Adrenal gland (tissue), 19 donors: ENCODE measurements at regions of chr12 and their contacts with region 1.

Region 1: DNA sequence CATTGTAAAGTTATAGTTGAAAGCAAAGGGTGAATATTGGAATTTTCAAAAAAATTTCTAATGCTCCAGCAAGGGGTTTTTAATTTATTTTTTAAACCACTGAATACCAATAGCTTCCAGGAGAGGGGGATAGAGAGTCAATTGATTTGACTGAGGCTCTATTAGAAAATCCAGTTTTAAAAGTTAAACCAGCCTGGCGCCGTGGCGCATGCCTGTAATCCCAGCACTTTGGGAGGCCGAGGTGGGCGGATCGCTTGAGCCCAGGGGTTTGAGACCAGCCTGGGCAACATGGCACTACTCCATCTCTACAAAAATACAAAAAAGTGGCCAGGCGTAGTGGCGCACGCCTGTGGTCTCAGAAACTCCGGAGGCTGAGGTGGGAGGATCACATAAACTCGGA is 150.1 kb downstream of the SLC38A4 start:
- DNase-seq: peak; percentile 26 to 65 (median 36)
- H3K4me3 ChIP-seq: peak overlapping the region in 1 of 4 donors; percentile 24
- H3K27ac ChIP-seq: no peak overlapping the region
- H3K4me1 ChIP-seq: no peaks in the 10 kb centered on the region
- H3K27me3 ChIP-seq: no peaks in the 10 kb centered on the region
- CTCF ChIP-seq: peak; percentile 67 to 81 (median 70)
- POLR2A ChIP-seq: no peak

Region 2: GRCh38 chr12:46342562-46343033 is 333.1 kb before region 1 on chr12:
- intact Hi-C with region 1: loop called in 1 of 2 experiments (anchors 5 kb)
- DNase-seq: peak in 5 of 7 donors; percentile 20 to 58 (median 35)
- H3K4me3 ChIP-seq: no peak overlapping the region
- H3K27ac ChIP-seq: no peak overlapping the region
- H3K4me1 ChIP-seq: no peaks in the 10 kb centered on the region
- H3K27me3 ChIP-seq: no peaks in the 10 kb centered on the region
- CTCF ChIP-seq: peak; percentile 16 to 73 (median 62)
- POLR2A ChIP-seq: no peak

Region 3: DNA sequence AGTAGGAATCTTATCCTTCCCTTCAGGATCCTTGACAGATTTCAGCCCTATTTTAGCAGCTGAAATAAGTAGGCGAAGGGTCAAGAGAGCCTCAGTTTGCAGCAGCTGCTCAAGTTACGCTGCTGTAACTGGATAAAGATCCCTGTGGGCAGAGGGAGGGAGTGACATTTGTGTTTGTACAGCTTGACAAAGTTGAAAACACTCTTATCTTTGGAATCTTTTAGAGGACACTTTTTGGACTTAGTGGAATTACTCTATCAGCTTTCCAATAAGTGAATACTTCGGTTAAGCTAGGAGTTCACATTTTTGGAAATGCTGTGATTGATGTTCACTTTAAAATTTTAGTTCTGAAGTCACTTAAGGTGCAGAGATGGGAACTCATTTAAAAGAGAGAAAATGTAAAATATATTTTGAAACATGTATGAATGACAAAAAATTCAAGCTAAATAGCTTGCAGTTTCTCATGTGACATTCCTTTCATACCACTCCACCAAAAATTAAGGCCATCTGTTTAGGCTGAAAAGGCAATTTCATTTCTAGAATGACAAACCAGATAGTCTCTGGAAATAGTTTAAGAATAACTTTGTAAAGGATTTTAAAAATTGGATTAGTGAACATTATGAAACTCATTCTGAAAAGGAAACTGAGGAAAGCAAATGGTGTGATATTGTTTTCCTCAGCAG is 94.9 kb after region 1 on chr12:
- intact Hi-C with region 1: no loop called
- DNase-seq: peak; percentile 14 to 68 (median 34)
- H3K4me3 ChIP-seq: no peak overlapping the region
- H3K27ac ChIP-seq: peak overlapping the region in 3 of 5 donors; percentile 13 to 53 (median 49)
- H3K4me1 ChIP-seq: peaks cover 16 to 18% of the 10 kb centered on the region in 2 donors
- H3K27me3 ChIP-seq: no peaks in the 10 kb centered on the region
- CTCF ChIP-seq: no peak
- POLR2A ChIP-seq: no peak

Region 4: DNA sequence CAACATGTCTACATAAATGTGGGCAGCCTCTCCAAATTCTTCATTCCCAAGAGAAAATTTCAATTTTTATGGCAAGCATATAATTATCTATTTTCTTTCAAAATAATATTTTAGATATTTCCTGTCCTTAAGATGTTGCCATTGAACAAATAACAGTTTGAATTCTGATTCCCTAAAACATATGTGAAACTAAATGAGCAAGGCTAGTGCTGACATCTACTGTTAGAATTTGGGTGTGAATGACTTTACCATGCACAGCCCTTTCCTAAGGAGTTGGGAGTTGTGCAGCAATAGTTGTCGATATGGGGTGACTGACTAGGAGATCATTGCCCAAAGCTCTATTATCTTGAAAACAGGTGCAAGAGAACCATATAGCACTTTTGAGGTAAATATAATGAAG is 258.2 kb after region 1 on chr12:
- intact Hi-C with region 1: loop called in 1 of 2 experiments (anchors 5 kb)
- DNase-seq: peak in 1 of 7 donors; percentile 5
- H3K4me3 ChIP-seq: no peak overlapping the region
- H3K27ac ChIP-seq: no peak overlapping the region
- H3K4me1 ChIP-seq: no peaks in the 10 kb centered on the region
- H3K27me3 ChIP-seq: no peaks in the 10 kb centered on the region
- CTCF ChIP-seq: peak; percentile 28 to 66 (median 54)
- POLR2A ChIP-seq: no peak

Region 5: DNA sequence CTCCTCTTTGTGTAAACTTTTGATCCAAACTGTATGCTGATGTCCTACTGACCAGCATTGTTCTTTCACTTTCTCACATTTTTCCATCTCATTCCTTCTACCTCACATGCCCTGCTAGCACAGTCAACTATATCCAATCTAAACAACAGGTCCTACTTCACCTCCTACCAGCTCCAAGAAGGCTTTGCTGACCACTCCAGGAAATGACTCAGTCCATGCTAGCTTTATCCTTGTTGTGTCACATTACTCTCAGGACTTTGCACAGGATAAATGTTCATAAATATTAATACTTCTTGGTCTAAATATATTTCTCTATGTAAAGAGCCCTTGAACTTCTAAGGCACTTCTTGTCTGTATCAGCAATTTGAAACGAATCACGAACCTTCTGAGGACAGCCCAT is 338.7 kb after region 1 on chr12:
- intact Hi-C with region 1: loop called in 1 of 2 experiments (anchors 10 kb)
- DNase-seq: no peak
- H3K4me3 ChIP-seq: no peak overlapping the region
- H3K27ac ChIP-seq: no peak overlapping the region
- H3K4me1 ChIP-seq: no peaks in the 10 kb centered on the region
- H3K27me3 ChIP-seq: no peaks in the 10 kb centered on the region
- CTCF ChIP-seq: no peak
- POLR2A ChIP-seq: no peak

Region 6: DNA sequence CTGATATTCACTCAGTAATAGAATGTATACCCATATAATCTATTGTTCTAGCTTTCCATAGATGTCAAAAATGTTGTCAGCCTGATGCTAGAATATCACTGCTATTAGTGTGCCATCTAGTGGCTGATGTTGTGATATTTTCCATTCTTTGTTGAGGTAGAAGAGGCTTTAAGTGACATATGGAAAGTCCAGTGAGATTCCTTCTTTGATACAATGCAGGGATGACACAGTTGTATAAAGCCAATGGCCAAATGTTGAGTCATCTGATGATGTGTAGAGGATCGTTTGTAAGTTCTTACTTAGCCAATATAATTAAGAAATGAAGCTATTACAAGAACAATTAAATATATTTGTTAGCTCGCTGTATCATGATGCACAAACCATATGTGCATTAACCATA is 345.6 kb after region 1 on chr12:
- intact Hi-C with region 1: loop called (anchors 10 kb)
- DNase-seq: no peak
- H3K4me3 ChIP-seq: no peak overlapping the region
- H3K27ac ChIP-seq: no peak overlapping the region
- H3K4me1 ChIP-seq: no peaks in the 10 kb centered on the region
- H3K27me3 ChIP-seq: no peaks in the 10 kb centered on the region
- CTCF ChIP-seq: peak; percentile 61 to 75 (median 68)
- POLR2A ChIP-seq: no peak